ENCODE measurements at regions of chr17 and their contacts with region 1.

Region 1: GRCh38 chr17:58631523-58632323 is 60.1 kb downstream of the TEX14 start:
- DNase-seq: peak; percentile 89 to 95
- H3K4me3 ChIP-seq: peak overlapping the region; percentile 41 to 65 (median 48); a peak in 7 of 8 replicates
- H3K27ac ChIP-seq: peak overlapping the region; percentile 96
- H3K4me1 ChIP-seq: peaks cover 0 to 3% (median 2%) of the 10 kb centered on the region in 4 experiments; a peak in 6 of 7 replicates
- H3K27me3 ChIP-seq: no peaks in the 10 kb centered on the region
- CTCF ChIP-seq: no peak
- EP300 ChIP-seq: 0 out of 3 replicates have a peak, but pooled peaks of 1 of the 2 experiments have one; percentile 64
- POLR2A ChIP-seq: peak; percentile 99 to 100
- RAD21 ChIP-seq: 0 out of 4 replicates have a peak, but pooled peaks of 1 of the 2 experiments have one; percentile 11

Region 2: GRCh38 chr17:58517734-58518609 is 113.8 kb before region 1 on chr17:
- CTCF ChIA-PET with region 1: interaction called, 4 read pairs
- POLR2A ChIA-PET with region 1: interaction called, 42 read pairs
- DNase-seq: peak; percentile 95 to 100
- H3K4me3 ChIP-seq: peak overlapping the region; percentile 79 to 94 (median 86)
- H3K27ac ChIP-seq: peak overlapping the region; percentile 58
- H3K4me1 ChIP-seq: peaks cover 0 to 17% (median 5%) of the 10 kb centered on the region in 4 experiments; a peak in 5 of 7 replicates
- H3K27me3 ChIP-seq: no peaks in the 10 kb centered on the region
- CTCF ChIP-seq: no peak
- EP300 ChIP-seq: 0 out of 3 replicates have a peak, but pooled peaks of 1 of the 2 experiments have one; percentile 42
- POLR2A ChIP-seq: peak in 1 of 2 experiments; percentile 79; a peak in 1 of 3 replicates
- RAD21 ChIP-seq: no peak

Region 3: GRCh38 chr17:58565780-58566189 is 65.9 kb before region 1 on chr17:
- CTCF ChIA-PET with region 1: no interaction called
- POLR2A ChIA-PET with region 1: interaction called, 14 read pairs
- DNase-seq: peak in 1 of 2 experiments; percentile 29
- H3K4me3 ChIP-seq: peak overlapping the region in 1 of 4 experiments; percentile 7; a peak in 1 of 8 replicates
- H3K27ac ChIP-seq: no peak overlapping the region
- H3K4me1 ChIP-seq: peaks cover 2 to 17% (median 12%) of the 10 kb centered on the region in 4 experiments; a peak in 6 of 7 replicates
- H3K27me3 ChIP-seq: no peaks in the 10 kb centered on the region
- CTCF ChIP-seq: no peak
- EP300 ChIP-seq: no peak
- POLR2A ChIP-seq: no peak
- RAD21 ChIP-seq: no peak

Region 4: GRCh38 chr17:58605470-58605869 is 26.3 kb before region 1 on chr17:
- CTCF ChIA-PET with region 1: no interaction called
- POLR2A ChIA-PET with region 1: interaction called, 73 read pairs
- DNase-seq: no peak
- H3K4me3 ChIP-seq: no peak overlapping the region
- H3K27ac ChIP-seq: no peak overlapping the region
- H3K4me1 ChIP-seq: peaks cover 0 to 9% (median 2%) of the 10 kb centered on the region in 4 experiments; a peak in 3 of 7 replicates
- H3K27me3 ChIP-seq: no peaks in the 10 kb centered on the region
- CTCF ChIP-seq: no peak
- EP300 ChIP-seq: no peak
- POLR2A ChIP-seq: no peak
- RAD21 ChIP-seq: no peak

Region 5: DNA sequence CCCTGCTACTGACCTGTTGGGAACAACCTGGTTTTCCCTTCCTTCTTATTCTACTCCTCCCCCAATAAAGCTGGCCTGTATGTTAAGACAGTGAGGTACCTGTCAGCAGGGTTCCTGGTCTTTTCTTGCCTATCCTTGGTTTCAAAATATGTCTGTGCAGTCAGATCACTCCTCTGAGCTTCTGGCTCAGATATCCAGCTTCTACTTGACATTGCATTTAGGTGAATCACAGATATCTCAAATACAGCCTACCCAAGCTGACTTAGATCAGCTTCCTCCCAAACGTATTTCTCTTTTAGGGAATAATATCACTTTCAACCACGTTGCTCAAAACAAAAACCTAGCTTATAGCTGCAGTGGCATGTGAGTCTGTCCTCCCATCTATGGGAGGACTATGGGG is 11.4 kb after region 1 on chr17:
- CTCF ChIA-PET with region 1: interaction called, 4 read pairs
- POLR2A ChIA-PET with region 1: interaction called, 95 read pairs
- DNase-seq: no peak
- H3K4me3 ChIP-seq: no peak overlapping the region
- H3K27ac ChIP-seq: no peak overlapping the region
- H3K4me1 ChIP-seq: no peaks in the 10 kb centered on the region
- H3K27me3 ChIP-seq: no peaks in the 10 kb centered on the region
- CTCF ChIP-seq: no peak
- EP300 ChIP-seq: no peak
- POLR2A ChIP-seq: no peak
- RAD21 ChIP-seq: no peak

Region 6: GRCh38 chr17:58666858-58667619 is 35.3 kb after region 1 on chr17:
- CTCF ChIA-PET with region 1: interaction called, 3 read pairs
- POLR2A ChIA-PET with region 1: interaction called, 230 read pairs
- DNase-seq: no peak
- H3K4me3 ChIP-seq: no peak overlapping the region
- H3K27ac ChIP-seq: no peak overlapping the region
- H3K4me1 ChIP-seq: peaks cover 0 to 4% (median 1%) of the 10 kb centered on the region in 4 experiments; a peak in 2 of 7 replicates
- H3K27me3 ChIP-seq: no peaks in the 10 kb centered on the region
- CTCF ChIP-seq: no peak
- EP300 ChIP-seq: no peak
- POLR2A ChIP-seq: no peak
- RAD21 ChIP-seq: no peak

Region 7: DNA sequence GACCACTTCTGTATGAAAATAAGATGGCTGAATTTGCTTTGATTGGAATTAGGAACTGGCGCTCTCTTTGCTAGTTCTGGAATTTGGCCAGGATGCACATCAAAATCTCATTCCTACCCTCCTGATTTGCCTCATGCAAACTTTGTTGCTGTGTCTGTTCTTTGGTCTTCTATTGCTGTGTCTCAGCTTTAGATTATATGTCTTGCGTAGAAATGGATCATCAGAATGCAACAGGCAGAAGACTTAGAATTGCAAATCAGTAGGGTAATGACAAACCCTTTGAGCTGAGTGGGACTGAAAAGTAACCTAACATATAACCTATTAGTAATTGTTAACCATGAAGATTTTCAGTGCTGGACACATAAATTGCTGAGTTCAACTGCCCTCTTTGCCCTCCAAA is 91.0 kb after region 1 on chr17:
- CTCF ChIA-PET with region 1: no interaction called
- POLR2A ChIA-PET with region 1: no interaction called
- DNase-seq: no peak
- H3K4me3 ChIP-seq: no peak overlapping the region
- H3K27ac ChIP-seq: no peak overlapping the region
- H3K4me1 ChIP-seq: no peaks in the 10 kb centered on the region
- H3K27me3 ChIP-seq: no peaks in the 10 kb centered on the region
- CTCF ChIP-seq: no peak
- EP300 ChIP-seq: no peak
- POLR2A ChIP-seq: no peak
- RAD21 ChIP-seq: no peak

Region 8: GRCh38 chr17:58741121-58741625 is 109.5 kb after region 1 on chr17:
- CTCF ChIA-PET with region 1: no interaction called
- POLR2A ChIA-PET with region 1: no interaction called
- DNase-seq: no peak
- H3K4me3 ChIP-seq: no peak overlapping the region
- H3K27ac ChIP-seq: no peak overlapping the region
- H3K4me1 ChIP-seq: no peaks in the 10 kb centered on the region
- H3K27me3 ChIP-seq: no peaks in the 10 kb centered on the region
- CTCF ChIP-seq: no peak
- EP300 ChIP-seq: no peak
- POLR2A ChIP-seq: no peak
- RAD21 ChIP-seq: no peak

Region 9: DNA sequence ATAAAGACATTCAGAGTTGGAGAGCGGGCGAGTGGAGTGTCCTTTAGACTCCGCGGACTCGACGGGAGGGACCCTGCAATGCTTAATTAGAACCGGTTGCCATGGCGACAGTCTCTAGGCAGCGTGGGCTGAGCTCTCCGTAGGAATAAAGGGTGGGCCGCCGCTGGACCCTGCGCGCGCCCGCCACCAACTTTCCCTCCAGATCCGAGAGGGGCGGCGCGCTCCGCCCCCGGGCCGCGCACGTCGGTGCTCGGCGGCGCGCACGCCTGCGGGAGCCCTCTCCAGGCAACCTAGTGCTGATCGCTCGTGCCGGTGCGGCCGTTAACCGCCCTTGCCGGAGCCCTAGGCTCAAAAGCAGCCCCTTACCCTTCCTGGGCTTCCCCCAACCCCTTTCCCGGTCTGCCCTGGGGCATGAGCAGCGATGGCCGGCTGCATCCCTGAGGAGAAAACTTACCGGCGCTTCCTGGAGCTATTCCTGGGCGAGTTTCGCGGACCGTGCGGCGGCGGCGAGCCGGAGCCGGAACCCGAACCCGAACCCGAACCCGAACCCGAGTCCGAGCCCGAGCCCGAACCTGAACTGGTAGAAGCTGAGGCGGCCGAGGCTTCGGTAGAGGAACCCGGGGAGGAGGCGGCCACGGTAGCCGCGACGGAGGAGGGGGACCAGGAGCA is 124.0 kb after region 1 on chr17 and contains the start of gene PPM1E:
- CTCF ChIA-PET with region 1: no interaction called
- POLR2A ChIA-PET with region 1: interaction called, 14 read pairs
- DNase-seq: peak; percentile 81 to 93
- H3K4me3 ChIP-seq: peak within 1 kb of the TSS; percentile 65 to 94 (median 78)
- H3K27ac ChIP-seq: no peak within 1 kb of the TSS
- H3K4me1 ChIP-seq: no peaks in the 10 kb centered on the region; a peak in 1 of 7 replicates
- H3K27me3 ChIP-seq: peaks cover 0 to 7% (median 0%) of the 10 kb centered on the region in 4 experiments; a peak in 3 of 7 replicates
- CTCF ChIP-seq: no peak
- EP300 ChIP-seq: 0 out of 3 replicates have a peak, but pooled peaks of 1 of the 2 experiments have one; percentile 42
- POLR2A ChIP-seq: no peak
- RAD21 ChIP-seq: peak; percentile 4 to 8; a peak in 1 of 4 replicates
- total RNA-seq, gene PPM1E: 9.4 and 10.4 TPM in 2 replicates